Ovary (tissue), 10 donors: ENCODE measurements at regions of chr5 and their contacts with region 1.

Region 1: DNA sequence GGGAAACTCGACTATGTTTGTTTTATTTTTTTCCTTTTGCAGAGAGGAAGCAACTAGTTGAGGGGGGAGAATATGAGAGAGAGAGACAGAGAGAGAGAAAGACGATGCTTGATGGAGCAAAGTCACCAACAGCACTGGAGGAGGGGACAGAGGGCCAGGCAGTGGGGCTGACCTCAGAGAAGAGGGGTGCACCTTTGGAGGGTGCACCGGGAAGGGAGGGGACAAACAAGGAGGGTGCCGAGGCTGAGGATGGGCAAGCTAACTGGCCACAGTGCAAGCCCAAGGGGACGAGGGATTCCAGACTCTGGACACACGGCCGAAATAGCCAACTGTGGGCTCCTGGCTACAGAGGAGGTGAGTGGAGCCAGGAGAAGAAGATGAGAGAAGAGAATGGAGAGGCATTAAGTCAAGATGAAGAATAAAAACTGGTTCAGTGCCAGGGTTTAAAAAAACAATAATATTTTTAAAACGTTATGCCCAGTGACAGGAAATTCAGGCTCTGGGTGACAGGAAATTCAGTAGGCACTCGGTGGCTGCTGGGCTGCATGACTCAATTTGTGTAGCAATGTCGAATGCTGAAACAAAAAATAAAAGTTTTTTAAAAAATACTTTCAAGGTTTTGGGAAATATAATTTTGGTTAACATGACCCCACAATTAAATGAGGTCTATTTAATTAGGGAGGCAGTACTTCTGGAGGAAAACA is 13.3 kb upstream of the GLRX start:
- DNase-seq: no peak
- H3K4me3 ChIP-seq: no peak overlapping the region
- H3K27ac ChIP-seq: no peak overlapping the region
- H3K4me1 ChIP-seq: no peaks in the 10 kb centered on the region
- H3K27me3 ChIP-seq: no peaks in the 10 kb centered on the region
- CTCF ChIP-seq: no peak
- EP300 ChIP-seq: no peak
- POLR2A ChIP-seq: no peak

Region 2: DNA sequence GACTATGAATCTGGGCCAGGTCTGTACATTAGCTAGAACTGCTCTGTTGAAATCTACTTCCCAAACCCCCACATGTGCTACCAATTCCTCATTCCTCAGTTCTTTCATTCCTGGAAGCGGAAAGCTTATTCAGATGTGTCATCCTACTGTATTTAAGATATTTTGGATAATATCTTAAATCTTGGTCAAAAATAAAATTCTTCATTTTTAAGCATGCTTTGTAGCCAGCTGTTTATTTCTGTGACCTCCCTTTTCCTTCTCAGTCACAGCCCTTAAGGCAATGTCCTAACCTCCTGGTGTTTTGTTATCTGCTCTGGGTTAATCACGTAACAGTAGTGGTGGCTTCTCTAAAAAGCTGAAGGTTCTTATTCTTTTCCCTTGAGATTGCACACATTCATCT is 48.9 kb before region 1 on chr5:
- intact Hi-C with region 1: loop called in 2 of 4 experiments (anchors 5 to 10 kb)
- DNase-seq: no peak
- H3K4me3 ChIP-seq: no peak overlapping the region
- H3K27ac ChIP-seq: no peak overlapping the region
- H3K4me1 ChIP-seq: peaks cover 1% of the 10 kb centered on the region
- H3K27me3 ChIP-seq: no peaks in the 10 kb centered on the region
- CTCF ChIP-seq: no peak
- EP300 ChIP-seq: no peak
- POLR2A ChIP-seq: no peak